ENCODE measurements at regions of chr16 and their contacts with region 1.

Region 1: GRCh38 chr16:3819746-3820724 is 60.5 kb downstream of the CREBBP start:
- DNase-seq: no peak

Region 2: DNA sequence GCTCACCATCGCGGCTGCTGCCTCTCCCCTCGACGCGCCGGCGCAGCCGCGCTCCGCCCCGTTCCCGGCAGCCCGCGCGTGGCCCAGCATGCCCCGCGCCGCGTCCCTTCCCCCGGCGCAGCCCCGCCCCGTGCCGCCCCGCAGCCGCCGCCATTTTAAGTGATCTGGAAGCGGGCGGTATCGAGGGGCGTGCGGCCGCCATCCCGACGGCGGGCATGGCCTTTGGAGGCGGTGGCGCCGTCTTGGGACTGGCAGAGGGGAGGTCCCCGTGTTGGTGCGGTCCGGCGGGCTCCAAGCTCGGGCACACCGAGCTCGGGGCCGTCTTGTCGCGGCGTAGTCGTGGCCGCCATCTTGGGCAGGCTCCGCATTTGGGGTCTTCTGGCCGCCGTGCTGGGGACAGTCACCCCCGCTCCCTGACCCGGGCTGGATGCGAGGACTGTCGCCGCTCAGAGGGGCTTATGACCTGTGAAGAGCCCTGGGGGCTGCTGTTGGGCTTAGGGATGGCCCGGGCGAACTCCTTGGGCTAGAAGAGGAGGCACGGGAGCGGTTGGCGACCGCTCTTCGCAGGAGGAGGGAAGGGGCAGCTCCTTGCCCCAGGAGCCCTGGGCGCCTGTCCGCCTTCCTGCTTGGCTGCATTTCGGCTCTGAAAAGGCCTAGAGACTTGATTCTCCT is 1042.7 kb before region 1 on chr16 and contains the start of gene ELOB:
- intact Hi-C with region 1: loop called in 1 of 2 experiments (anchors 5 kb)
- DNase-seq: peak; percentile 97
- total RNA-seq, gene ELOB: 182 to 196 TPM

Region 3: GRCh38 chr16:3861808-3862451 is 41.9 kb after region 1 on chr16:
- intact Hi-C with region 1: loop called in 1 of 2 experiments (anchors 10 kb)
- DNase-seq: no peak

Measured in posterior vena cava (tissue), 2 donors.